ENCODE measurements at regions of chr18 and their contacts with region 1.

Region 1: DNA sequence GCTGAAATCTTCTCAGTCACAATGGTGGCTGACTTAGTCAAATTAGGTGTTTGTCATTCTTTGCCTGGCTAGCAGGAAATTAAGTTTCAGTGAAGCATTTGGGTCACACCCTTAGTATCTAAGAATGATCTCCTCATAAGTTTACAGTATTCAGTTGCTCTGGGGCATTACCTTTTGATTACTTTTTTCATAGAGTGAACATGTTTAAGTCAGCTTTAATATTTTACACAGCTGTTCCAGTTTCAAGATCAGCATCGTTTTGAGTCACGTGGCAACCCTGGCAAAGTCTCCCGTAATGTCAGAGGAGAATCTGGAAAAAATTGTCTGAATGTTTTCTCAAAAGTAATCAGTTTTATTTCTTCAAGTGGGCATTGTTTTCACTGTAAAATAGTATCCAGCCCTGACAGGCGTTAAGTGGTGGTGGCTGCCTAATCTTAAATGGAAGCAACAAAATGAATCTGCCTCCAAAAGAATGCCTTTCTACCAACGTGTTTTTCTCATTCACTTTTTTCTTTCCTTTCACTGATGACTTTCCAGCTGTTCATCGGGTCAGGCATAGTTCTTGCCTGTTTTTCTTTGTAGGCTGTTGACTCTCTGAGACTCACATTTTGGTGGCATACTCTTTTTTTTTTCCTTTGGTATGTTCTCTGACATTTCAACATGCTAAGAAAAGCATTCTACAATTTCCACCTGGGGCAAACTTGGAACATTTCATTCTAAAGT is 319.6 kb upstream of the TCF4 start:
- DNase-seq: peak; percentile 49
- ATAC-seq: peak; percentile 31

Region 2: DNA sequence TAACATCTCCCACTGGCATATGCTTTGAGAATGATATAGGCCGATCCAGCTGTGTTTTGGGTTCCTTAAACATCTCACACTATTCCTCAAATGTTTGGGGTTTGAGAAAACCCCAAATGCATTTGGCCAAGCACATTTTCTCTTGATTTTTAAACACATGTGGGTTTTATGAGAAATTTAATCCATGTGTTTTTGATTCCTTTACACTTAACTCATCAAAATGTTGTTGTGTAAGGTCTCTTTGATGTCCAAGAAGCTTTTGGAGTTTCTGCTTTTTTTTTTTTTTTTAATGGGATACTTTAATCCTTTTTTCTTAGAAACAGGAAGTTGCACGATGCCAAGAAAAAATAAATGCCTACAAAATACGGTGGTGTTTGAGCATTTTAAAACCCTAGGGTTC is 20.2 kb after region 1 on chr18:
- intact Hi-C with region 1: loop called (anchors 2 kb)
- DNase-seq: no peak
- ATAC-seq: no peak

Measured in Right ventricle myocardium superior (tissue), 1 donor.